ENCODE measurements at regions of chr6 and their contacts with region 1.

Region 1: GRCh38 chr6:121319112-121319553 is 15.1 kb downstream of the TBC1D32 start:
- DNase-seq: peak; percentile 15
- CTCF ChIP-seq: no peak

Region 2: GRCh38 chr6:121055572-121056163 is 263.5 kb before region 1 on chr6:
- CTCF ChIA-PET with region 1: interaction called, 12 read pairs
- POLR2A ChIA-PET with region 1: no interaction called
- DNase-seq: peak; percentile 15
- CTCF ChIP-seq: peak; percentile 55

Region 3: GRCh38 chr6:121285041-121285440 is 34.1 kb before region 1 on chr6:
- CTCF ChIA-PET with region 1: no interaction called
- POLR2A ChIA-PET with region 1: no interaction called
- DNase-seq: no peak
- CTCF ChIP-seq: no peak

Region 4: GRCh38 chr6:121305957-121306607 is 13.1 kb before region 1 on chr6:
- CTCF ChIA-PET with region 1: interaction called, 44 read pairs
- POLR2A ChIA-PET with region 1: no interaction called
- DNase-seq: peak; percentile 28
- CTCF ChIP-seq: peak; percentile 69

Region 5: DNA sequence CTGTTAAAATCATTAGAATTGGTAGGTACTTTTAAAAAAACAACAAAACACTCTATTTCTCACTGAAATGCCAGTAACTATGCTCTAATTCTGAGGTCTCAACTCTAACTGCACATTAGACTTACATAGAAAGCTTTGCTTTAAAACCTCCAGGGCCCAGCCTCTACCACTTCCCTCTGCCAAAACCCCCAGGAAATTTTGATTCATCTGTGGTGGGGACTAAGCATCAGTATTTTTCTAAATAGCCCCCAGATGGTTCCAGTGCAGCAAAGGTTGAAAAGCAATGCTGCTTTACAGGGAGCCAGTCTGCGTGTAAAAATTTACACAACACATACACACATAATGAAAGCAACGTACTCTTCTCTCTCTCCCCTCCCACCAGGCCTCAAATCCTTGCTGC is 11.4 kb after region 1 on chr6:
- CTCF ChIA-PET with region 1: interaction called, 10 read pairs
- POLR2A ChIA-PET with region 1: no interaction called
- DNase-seq: no peak
- CTCF ChIP-seq: no peak